ENCODE measurements at regions of chr9 and their contacts with region 1.

Region 1: DNA sequence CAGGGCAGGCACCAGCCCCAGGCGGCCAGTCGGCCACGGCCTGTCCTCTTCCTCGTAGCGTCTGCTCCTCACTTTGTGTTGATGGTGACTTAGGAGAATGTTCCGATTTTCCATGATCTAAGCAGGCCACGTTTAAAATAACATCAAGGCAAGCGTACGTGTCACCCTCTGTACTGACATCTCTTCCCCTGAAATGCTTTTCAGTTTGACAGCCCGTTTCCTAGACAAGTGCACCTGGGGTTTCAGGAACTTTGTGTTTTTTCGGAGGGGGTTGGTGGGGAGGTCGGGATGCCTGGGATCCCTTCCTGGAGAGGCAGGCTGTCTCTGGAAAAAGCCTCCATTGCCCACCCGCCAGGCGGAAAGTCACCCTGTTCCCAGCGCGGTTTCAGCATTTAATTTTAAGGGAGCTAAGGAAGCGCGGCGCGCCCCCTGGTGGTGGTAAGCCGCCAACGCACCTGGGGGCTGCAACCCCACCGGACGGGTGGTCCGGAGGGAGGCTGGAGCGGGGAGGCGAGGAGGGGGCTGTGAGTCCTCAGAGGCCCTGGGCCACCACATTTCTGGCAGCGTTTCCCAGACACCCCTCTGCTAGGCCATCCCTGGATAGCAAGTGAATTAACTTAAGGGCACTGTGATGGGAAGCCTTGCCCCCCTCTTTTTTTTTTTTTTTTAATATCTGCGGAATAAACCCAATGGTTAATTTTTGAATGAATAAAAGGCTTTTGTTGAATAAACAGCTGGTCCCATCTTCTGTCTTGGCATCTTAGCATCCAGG is 29.5 kb upstream of the HMCN2 start:
- DNase-seq: peak; percentile 62 to 93 (median 72)
- ATAC-seq: peak; percentile 53
- H3K4me3 ChIP-seq: no peak overlapping the region
- H3K27ac ChIP-seq: no peak overlapping the region
- H3K4me1 ChIP-seq: peaks cover 0 to 14% of the 10 kb centered on the region in 2 donors
- H3K27me3 ChIP-seq: no peaks in the 10 kb centered on the region
- CTCF ChIP-seq: peak; percentile 96 to 99

Region 2: DNA sequence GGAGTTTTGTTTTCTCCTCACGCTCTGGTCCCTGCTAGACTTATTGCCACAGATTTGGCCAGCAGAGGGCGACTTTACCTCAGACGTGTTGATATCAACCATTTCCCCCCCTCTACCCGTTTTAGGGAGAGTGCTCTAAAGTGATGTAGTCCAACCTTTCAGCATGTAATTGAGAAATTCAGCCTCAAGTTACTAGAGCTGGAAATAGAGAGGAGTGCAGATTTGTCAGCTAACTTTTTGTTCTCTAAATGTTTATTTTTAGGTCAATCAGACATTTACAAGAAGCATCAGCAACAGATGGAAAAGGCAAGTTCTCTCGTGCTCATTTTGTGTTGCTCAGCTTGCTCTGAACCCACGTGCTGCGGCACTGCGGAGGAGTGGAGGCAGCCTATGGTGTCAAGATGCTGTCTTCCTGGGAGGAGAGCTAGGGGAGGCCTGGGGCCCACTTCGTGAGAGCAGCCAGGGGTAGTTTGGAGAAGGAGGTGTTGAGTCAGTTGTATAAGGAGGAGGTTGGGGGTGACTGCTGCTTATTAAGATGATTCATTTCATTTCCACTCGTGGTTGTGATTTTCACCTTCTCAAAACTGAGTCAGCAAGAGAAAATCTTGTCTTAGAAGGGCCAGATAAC is 128.7 kb before region 1 on chr9:
- intact Hi-C with region 1: loop called in 1 of 2 experiments (anchors 5 kb)
- DNase-seq: peak in 3 of 4 donors; percentile 69 to 83 (median 77)
- ATAC-seq: peak; percentile 91
- H3K4me3 ChIP-seq: no peak overlapping the region
- H3K27ac ChIP-seq: no peak overlapping the region
- H3K4me1 ChIP-seq: no peaks in the 10 kb centered on the region
- H3K27me3 ChIP-seq: no peaks in the 10 kb centered on the region
- CTCF ChIP-seq: peak; percentile 65 to 80

Region 3: DNA sequence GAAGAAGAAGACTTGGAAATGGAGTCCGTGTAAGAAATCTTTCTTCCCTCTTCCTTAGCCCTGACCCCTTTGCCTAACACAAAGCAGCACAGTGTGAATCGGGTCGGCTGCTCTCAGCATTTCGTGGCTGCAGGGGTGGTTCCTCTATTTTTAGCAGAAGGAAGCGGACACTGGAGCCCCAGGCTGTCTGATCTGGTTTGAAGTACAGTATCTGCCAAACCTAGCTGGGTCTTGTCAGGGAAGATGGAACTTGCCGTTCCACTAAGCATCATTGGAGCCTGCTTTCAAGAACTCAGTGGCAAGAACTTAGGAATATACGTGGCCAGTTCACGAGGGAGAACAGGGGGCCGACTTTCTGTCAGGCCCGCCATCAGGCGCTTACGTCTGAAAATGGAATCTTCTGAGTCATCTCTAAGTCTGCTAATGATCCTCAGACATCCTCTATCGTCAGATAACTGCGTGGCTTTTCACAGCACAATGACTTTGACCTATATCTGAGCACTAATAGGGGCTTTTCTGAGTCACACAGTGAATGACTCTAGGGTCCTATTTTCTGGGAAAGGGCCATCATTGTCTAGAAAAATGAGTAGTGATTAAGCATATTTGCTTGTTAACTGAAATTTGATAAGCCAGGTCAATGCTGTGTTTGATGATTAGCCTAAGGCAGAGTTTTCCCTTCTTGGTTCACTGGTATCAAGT is 107.2 kb before region 1 on chr9:
- intact Hi-C with region 1: loop called in 1 of 2 experiments (anchors 10 kb)
- DNase-seq: peak in 1 of 4 donors; percentile 76
- ATAC-seq: peak; percentile 78
- H3K4me3 ChIP-seq: no peak overlapping the region
- H3K27ac ChIP-seq: peak overlapping the region; percentile 74 to 81
- H3K4me1 ChIP-seq: peaks cover 11 to 33% of the 10 kb centered on the region in 2 donors
- H3K27me3 ChIP-seq: no peaks in the 10 kb centered on the region
- CTCF ChIP-seq: no peak

Region 4: DNA sequence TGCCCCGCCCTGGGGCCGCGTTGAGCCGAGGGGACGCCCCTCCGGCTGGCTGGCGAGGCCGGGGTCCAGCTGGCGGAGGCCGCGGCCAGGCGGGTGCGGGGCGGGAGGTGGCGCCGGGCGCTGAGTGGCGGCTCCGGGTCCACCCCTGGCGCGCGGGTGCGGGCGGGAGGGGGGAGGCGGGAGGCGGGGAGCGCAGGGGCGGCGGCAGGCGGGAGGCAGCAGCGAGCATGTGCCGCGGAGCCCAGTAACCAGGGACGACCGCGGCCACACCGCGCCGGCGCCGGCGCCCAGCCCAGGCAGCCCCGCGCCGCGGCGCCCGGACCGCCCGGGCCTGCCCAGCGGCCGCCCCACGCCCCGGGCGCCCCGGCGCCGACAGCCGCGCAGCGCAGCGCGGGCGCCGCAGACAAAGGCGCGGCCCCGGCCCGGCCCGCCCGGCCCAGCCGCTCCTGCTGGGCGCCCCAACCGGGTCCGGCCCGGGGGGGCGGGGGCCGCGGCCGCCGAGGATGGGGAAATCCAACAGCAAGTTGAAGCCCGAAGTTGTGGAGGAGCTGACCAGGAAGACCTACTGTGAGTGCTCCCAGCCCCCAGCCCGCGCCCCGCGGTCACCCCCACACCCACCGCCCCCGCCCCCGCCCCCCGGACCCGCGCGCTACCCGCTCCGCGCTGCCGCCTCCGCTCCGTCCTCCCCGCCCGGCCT is 63.8 kb before region 1 on chr9 and contains the start of gene NCS1:
- intact Hi-C with region 1: no loop called
- DNase-seq: peak; percentile 66 to 88 (median 82)
- ATAC-seq: peak; percentile 95
- H3K4me3 ChIP-seq: peak within 1 kb of the TSS; percentile 41 to 45
- H3K27ac ChIP-seq: no peak within 1 kb of the TSS
- H3K4me1 ChIP-seq: peaks cover 0 to 10% of the 10 kb centered on the region in 2 donors
- H3K27me3 ChIP-seq: peaks cover 0 to 39% of the 10 kb centered on the region in 2 donors
- CTCF ChIP-seq: no peak
- polyA plus RNA-seq, gene NCS1: 16.7 to 24.9 (median 19.5) TPM

Region 5: DNA sequence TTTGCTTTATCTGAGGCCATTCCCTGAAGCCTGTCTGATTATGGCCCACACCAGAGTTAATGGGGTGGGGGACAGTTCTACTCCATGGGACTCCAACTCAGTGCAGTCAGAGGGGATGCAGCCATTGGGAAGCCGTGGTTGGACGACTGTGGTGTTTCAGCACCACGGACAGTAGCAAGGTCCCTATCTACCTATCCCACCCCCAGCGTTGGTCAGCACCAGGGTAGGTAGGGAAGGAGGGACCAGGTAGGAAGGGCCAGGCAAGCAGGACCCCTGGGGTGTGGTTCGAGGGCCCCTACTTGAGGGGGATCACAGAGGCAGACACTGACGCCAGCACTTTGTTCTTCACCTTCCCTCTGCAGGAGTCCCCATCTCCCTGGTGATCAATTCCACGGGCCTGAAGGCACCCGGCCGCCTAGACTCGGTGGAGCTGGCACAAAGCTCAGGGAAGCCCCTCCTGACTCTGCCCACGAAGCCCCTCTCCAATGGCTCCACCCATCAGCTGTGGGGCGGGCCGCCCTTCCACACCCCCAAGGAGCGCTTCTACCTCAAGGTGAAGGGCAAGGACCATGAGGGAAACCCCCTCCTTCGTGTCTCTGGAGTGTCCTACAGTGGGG is 62.7 kb after region 1 on chr9:
- intact Hi-C with region 1: no loop called
- DNase-seq: peak in 2 of 4 donors; percentile 23 to 43
- ATAC-seq: peak; percentile 20
- H3K4me3 ChIP-seq: no peak overlapping the region
- H3K27ac ChIP-seq: no peak overlapping the region
- H3K4me1 ChIP-seq: no peaks in the 10 kb centered on the region
- H3K27me3 ChIP-seq: peaks cover 0 to 21% of the 10 kb centered on the region in 2 donors
- CTCF ChIP-seq: no peak

Measured in left lung (tissue), 14 donors.